GM10248 (cell line): ENCODE measurements at regions of chr17 and their contacts with region 1.

Region 1: DNA sequence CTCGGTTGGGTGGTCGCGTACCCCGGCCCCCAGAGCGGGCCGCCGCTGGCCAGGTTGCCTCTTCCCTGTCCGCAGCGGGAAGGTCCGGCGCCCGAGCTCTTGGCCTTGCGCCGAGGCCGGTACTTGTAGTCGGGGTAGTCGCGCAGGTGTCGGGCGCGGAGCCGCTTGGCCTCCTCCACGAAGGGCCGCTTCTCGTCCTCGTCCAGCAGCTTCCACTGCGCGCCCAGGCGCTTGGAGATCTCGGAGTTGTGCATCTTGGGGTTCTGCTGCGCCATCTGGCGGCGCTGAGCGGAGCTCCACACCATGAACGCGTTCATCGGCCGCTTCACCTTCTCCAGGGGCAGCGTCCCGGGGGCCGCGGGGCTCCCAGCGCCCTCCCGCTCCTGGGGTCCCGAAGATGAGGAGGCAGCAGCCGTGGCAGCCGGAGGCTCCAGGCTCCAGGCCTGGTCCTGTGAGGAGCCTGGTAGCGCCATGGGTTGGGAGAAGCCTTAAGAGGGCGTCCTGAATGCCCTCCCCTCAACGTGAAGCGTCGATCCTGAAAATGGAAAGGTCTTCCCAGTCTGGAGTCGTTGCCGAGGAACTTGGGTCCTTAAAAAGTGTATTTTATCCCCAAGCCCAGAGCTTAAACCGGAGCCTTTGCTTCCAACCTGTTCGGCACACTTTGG is 558 bp downstream of the SOX15 start:
- DNase-seq: peak; percentile 85
- CTCF ChIP-seq: peak; percentile 80

Region 2: GRCh38 chr17:7502987-7503386 is 86.3 kb before region 1 on chr17:
- CTCF ChIA-PET with region 1: no interaction called
- POLR2A ChIA-PET with region 1: no interaction called
- DNase-seq: no peak
- CTCF ChIP-seq: peak; percentile 11

Region 3: DNA sequence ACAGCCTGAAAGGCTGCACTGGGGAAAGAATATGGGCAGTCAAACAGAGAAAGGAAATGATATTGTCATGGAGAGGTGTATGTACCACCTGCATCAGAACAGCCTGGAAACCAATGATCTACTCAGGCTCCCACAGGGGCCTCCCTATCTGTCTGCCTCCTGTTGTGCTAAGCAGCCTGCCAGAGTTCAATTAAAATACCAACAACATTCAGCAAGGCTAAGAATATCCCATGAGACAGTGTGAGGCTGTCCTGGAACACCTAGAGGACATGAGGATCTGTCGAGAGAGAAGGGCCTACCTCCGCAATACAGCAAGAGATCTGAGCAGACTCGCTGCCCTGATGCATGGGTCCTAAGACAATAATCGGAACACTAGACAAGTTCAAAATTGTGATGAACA is 16.9 kb after region 1 on chr17:
- CTCF ChIA-PET with region 1: interaction called, 14 read pairs
- POLR2A ChIA-PET with region 1: interaction called, 3 read pairs
- DNase-seq: no peak
- CTCF ChIP-seq: no peak